Left lung (tissue), 14 donors: ENCODE measurements at regions of chr11 and their contacts with region 1.

Region 1: DNA sequence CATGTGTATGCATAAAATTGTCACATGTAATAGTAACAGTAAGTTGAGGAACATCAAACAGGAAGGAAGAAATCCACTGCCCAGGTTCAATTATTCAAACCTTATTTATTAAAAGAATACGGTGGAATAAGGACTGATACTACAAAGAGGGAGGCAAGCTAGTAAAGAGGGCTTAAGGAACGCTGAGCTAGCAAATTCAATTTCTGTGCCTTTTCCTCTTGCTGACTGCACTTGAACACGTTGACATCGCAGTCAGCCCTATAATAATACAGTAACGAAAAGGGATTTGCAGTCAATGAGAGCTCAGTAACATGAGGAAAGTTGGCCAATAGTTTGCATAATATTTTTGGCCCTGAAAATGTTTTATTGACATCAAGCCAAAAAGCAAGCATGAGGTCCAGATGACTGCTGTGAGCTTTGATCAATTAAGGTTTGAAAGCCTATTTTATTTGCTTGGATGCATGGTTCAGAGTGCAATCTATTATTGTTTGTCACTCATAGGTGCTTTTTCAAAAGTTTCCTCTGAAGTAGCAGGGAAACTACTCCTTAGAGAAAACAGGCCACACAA is 861.8 kb downstream of the LRRC4C start:
- DNase-seq: peak in 1 of 4 donors; percentile 5
- ATAC-seq: no peak
- H3K4me3 ChIP-seq: no peak overlapping the region
- H3K27ac ChIP-seq: no peak overlapping the region
- H3K4me1 ChIP-seq: no peaks in the 10 kb centered on the region
- H3K27me3 ChIP-seq: no peaks in the 10 kb centered on the region
- CTCF ChIP-seq: no peak

Region 2: DNA sequence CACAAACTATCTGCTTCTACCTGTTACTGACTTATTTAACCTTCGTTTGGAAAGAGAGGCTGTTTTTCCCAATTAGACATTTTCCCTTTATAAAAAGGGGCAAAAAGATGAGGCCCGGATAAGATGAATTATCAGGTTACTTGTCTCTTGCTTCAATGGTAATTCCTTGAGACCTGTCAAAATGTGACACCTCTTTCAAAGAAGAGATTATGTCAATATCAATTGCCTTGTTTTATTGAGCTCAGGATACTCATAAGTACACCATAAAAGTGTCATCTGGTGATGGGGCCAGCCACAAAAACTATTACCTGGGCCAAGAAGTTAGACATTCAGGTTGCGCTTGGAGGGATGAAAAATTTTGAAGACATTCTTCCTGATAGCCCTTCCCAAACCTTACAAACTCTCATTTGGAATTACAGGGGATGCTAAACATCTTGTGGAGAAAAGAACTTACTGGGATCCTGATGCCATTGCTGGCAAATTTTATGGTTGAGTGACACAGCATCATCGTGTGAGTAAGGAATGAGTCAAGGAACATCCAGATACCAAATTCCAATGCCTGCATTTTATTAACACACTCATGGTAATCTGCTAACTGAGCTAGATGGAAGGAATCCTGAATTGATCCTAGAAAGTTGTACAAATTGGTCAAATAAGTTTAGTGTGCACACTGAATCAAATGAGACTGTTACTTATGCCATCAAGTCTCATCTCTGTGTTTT is 209.4 kb before region 1 on chr11:
- intact Hi-C with region 1: loop called in 1 of 2 experiments (anchors 10 kb)
- DNase-seq: no peak
- ATAC-seq: no peak
- H3K4me3 ChIP-seq: no peak overlapping the region
- H3K27ac ChIP-seq: no peak overlapping the region
- H3K4me1 ChIP-seq: no peaks in the 10 kb centered on the region
- H3K27me3 ChIP-seq: no peaks in the 10 kb centered on the region
- CTCF ChIP-seq: no peak